Breast epithelium (tissue), 4 donors: ENCODE measurements at regions of chr17 and their contacts with region 1.

Region 1: GRCh38 chr17:59435238-59435637 is 103.8 kb downstream of the YPEL2 start:
- DNase-seq: no peak
- H3K4me3 ChIP-seq: no peak overlapping the region
- H3K27ac ChIP-seq: no peak overlapping the region
- H3K4me1 ChIP-seq: no peaks in the 10 kb centered on the region
- H3K27me3 ChIP-seq: no peaks in the 10 kb centered on the region
- CTCF ChIP-seq: no peak
- POLR2A ChIP-seq: no peak

Region 2: DNA sequence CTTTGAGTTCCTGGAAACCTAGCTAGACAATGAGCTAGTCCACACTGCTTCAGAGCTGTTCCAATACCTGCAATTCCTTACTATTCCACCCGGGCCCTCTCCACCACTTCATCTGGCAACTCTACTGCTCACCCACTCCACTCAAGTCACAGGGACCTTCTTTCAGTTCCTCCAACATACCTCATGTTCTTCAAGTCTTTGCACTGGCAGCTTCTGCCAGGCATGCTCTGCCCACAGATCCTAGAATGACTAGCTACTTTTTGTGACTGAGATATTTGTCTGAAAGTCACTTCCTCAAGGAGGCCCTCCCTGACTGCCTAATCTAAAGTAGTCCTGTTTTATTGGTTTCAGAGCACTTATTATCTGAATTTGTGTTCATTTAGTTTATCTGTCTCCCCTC is 829.8 kb before region 1 on chr17:
- intact Hi-C with region 1: no loop called
- DNase-seq: no peak
- H3K4me3 ChIP-seq: no peak overlapping the region
- H3K27ac ChIP-seq: no peak overlapping the region
- H3K4me1 ChIP-seq: no peaks in the 10 kb centered on the region
- H3K27me3 ChIP-seq: no peaks in the 10 kb centered on the region
- CTCF ChIP-seq: no peak
- POLR2A ChIP-seq: no peak

Region 3: GRCh38 chr17:59300682-59301321 is 134.4 kb before region 1 on chr17:
- intact Hi-C with region 1: loop called (anchors 10 kb)
- DNase-seq: no peak
- H3K4me3 ChIP-seq: no peak overlapping the region
- H3K27ac ChIP-seq: no peak overlapping the region
- H3K4me1 ChIP-seq: no peaks in the 10 kb centered on the region
- H3K27me3 ChIP-seq: no peaks in the 10 kb centered on the region
- CTCF ChIP-seq: no peak
- POLR2A ChIP-seq: no peak

Region 4: GRCh38 chr17:60769031-60769726 is 1333.9 kb after region 1 on chr17:
- intact Hi-C with region 1: no loop called
- DNase-seq: no peak
- H3K4me3 ChIP-seq: no peak overlapping the region
- H3K27ac ChIP-seq: no peak overlapping the region
- H3K4me1 ChIP-seq: no peaks in the 10 kb centered on the region
- H3K27me3 ChIP-seq: no peaks in the 10 kb centered on the region
- CTCF ChIP-seq: no peak
- POLR2A ChIP-seq: no peak